ENCODE measurements at regions of chr1 and their contacts with region 1.

Region 1: GRCh38 chr1:223700942-223701637 is 11.2 kb upstream of the CAPN2 start:
- DNase-seq: peak; percentile 94
- H3K4me3 ChIP-seq: peak overlapping the region; percentile 14 to 20 (median 16)
- H3K27ac ChIP-seq: peak overlapping the region; percentile 93
- H3K4me1 ChIP-seq: peaks cover 52% of the 10 kb centered on the region
- H3K27me3 ChIP-seq: no peaks in the 10 kb centered on the region
- CTCF ChIP-seq: no peak

Region 2: GRCh38 chr1:223721658-223722607 is 20.8 kb after region 1 on chr1:
- CTCF ChIA-PET with region 1: no interaction called
- dilution Hi-C with region 1: no loop called
- in situ Hi-C with region 1: no loop called
- intact Hi-C with region 1: loop called (anchors 1 kb)
- DNase-seq: no peak
- H3K4me3 ChIP-seq: no peak overlapping the region
- H3K27ac ChIP-seq: peak overlapping the region; percentile 32
- H3K4me1 ChIP-seq: peaks cover 44% of the 10 kb centered on the region
- H3K27me3 ChIP-seq: no peaks in the 10 kb centered on the region
- CTCF ChIP-seq: no peak

Region 3: GRCh38 chr1:223776075-223776814 is 75.2 kb after region 1 on chr1:
- CTCF ChIA-PET with region 1: interaction called, 4 read pairs
- dilution Hi-C with region 1: loop called (anchors 5 kb)
- in situ Hi-C with region 1: no loop called
- intact Hi-C with region 1: loop called (anchors 2 kb)
- DNase-seq: peak; percentile 94
- H3K4me3 ChIP-seq: no peak overlapping the region
- H3K27ac ChIP-seq: peak overlapping the region; percentile 40
- H3K4me1 ChIP-seq: peaks cover 40% of the 10 kb centered on the region
- H3K27me3 ChIP-seq: no peaks in the 10 kb centered on the region
- CTCF ChIP-seq: no peak

Region 4: DNA sequence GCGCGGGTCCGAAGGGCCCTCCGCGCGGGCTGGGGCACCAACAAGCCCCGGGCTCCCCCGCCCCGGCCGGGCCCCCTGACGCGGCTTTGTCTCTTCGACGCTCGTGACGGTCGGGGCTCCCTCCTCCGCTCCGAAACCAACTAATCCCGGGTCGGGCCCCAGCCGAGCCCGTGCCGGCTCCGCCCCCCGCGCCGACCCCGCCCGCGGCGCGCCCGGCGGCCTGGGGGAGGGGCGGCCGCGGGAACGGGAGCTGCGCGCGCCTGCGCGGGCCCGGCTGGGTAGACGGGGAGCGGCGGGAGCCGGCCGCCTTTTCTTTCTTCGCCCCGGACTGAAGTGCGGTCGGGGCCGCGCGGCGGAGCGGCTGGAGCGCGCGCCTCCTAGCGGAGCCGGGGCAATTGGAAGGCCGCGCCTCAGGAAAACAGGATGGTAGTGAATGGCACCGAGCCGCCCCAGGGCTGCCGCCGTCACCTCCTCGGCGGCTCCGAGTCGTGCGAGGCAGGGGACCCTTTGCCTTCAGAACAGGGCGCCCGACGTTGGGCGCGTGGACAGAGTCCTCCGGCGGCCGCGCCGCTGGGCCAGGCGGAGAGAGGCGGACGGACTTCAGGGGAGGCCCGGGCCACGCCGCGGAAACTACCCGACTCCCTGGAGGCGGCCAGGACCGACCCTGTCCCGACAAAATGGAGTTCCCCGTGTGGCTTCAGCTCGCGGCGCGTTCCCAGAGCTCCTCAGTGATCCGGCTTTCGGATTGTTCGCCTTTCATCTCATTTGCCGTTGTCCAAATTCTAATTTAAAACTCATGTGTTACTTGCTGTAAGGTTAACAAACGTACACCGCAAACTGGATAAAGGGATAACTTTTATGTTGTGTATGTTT is 145.0 kb after region 1 on chr1 and contains the start of gene TP53BP2:
- CTCF ChIA-PET with region 1: no interaction called
- dilution Hi-C with region 1: no loop called
- in situ Hi-C with region 1: no loop called
- intact Hi-C with region 1: loop called (anchors 1 kb)
- DNase-seq: peak; percentile 86
- H3K4me3 ChIP-seq: peak within 1 kb of the TSS; percentile 82 to 98 (median 90)
- H3K27ac ChIP-seq: peak within 1 kb of the TSS; percentile 94
- H3K4me1 ChIP-seq: peaks cover 15% of the 10 kb centered on the region
- H3K27me3 ChIP-seq: no peaks in the 10 kb centered on the region
- CTCF ChIP-seq: peak; percentile 35 to 76
- total RNA-seq, gene TP53BP2: 13.7 to 19.4 TPM

Region 5: GRCh38 chr1:224113918-224114786 is 413.1 kb after region 1 on chr1 and contains the start of gene FBXO28:
- CTCF ChIA-PET with region 1: interaction called, 3 read pairs
- dilution Hi-C with region 1: no loop called
- in situ Hi-C with region 1: no loop called
- intact Hi-C with region 1: loop called (anchors 2 kb)
- DNase-seq: peak; percentile 88
- H3K4me3 ChIP-seq: peak within 1 kb of the TSS; percentile 58 to 85 (median 75)
- H3K27ac ChIP-seq: peak within 1 kb of the TSS; percentile 72
- H3K4me1 ChIP-seq: peaks cover 16% of the 10 kb centered on the region
- H3K27me3 ChIP-seq: no peaks in the 10 kb centered on the region
- CTCF ChIP-seq: no peak
- total RNA-seq, gene FBXO28: 41.0 to 49.4 TPM

Measured in mammary epithelial cell (primary cell).